ENCODE measurements at regions of chr15 and their contacts with region 1.

Region 1: DNA sequence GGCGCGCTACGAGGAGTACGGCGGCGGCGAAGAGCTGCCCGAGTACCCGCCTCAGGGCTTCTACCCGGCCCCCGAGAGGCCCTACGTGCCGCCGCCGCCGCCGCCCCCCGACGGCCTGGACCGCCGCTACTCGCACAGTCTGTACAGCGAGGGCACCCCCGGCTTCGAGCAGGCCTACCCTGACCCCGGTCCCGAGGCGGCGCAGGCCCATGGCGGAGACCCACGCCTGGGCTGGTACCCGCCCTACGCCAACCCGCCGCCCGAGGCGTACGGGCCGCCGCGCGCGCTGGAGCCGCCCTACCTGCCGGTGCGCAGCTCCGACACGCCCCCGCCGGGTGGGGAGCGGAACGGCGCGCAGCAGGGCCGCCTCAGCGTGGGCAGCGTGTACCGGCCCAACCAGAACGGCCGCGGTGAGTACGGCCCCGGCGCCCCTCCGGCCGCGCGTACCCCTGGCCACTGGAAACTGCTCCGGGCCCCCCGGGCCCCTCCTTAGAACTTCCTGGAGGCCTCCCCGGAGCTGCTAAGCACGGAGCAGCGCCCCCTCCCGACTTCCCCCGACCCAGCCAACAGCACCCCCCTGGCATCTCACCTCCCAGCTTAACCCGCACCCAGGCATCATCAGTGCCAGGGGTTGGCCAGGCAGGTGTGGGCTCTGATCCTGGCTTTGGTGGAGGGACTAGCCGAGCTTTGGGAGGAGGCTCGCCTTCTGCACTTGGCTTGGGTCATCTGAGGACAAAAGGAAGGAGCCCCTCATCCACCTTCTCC is 1.4 kb downstream of the LOXL1 start:
- DNase-seq: peak; percentile 93
- H3K4me3 Mint-ChIP-seq: peak overlapping the region; percentile 84
- H3K27ac Mint-ChIP-seq: peak overlapping the region; percentile 51
- H3K4me1 Mint-ChIP-seq: peaks cover 39% of the 10 kb centered on the region
- H3K27me3 Mint-ChIP-seq: peaks cover 6% of the 10 kb centered on the region

Region 2: GRCh38 chr15:73633991-73634495 is 293.6 kb before region 1 on chr15:
- intact Hi-C with region 1: no loop called
- DNase-seq: peak; percentile 59
- H3K4me3 Mint-ChIP-seq: peak overlapping the region; percentile 86
- H3K27ac Mint-ChIP-seq: peak overlapping the region; percentile 82
- H3K4me1 Mint-ChIP-seq: peaks cover 34% of the 10 kb centered on the region
- H3K27me3 Mint-ChIP-seq: peaks cover 23% of the 10 kb centered on the region

Region 3: GRCh38 chr15:73897441-73898261 is 30.0 kb before region 1 on chr15:
- intact Hi-C with region 1: loop called (anchors 1 kb)
- DNase-seq: peak; percentile 91
- H3K4me3 Mint-ChIP-seq: no peak overlapping the region
- H3K27ac Mint-ChIP-seq: no peak overlapping the region
- H3K4me1 Mint-ChIP-seq: no peaks in the 10 kb centered on the region
- H3K27me3 Mint-ChIP-seq: peaks cover 5% of the 10 kb centered on the region

Region 4: GRCh38 chr15:73950831-73951561 is 23.3 kb after region 1 on chr15:
- intact Hi-C with region 1: no loop called
- DNase-seq: peak; percentile 93
- H3K4me3 Mint-ChIP-seq: peak overlapping the region; percentile 31
- H3K27ac Mint-ChIP-seq: peak overlapping the region; percentile 69
- H3K4me1 Mint-ChIP-seq: peaks cover 4% of the 10 kb centered on the region
- H3K27me3 Mint-ChIP-seq: peaks cover under 1% of the 10 kb centered on the region

Region 5: GRCh38 chr15:73964736-73965093 is 37.1 kb after region 1 on chr15:
- intact Hi-C with region 1: loop called (anchors 1 kb)
- DNase-seq: peak; percentile 96
- H3K4me3 Mint-ChIP-seq: peak overlapping the region; percentile 72
- H3K27ac Mint-ChIP-seq: peak overlapping the region; percentile 92
- H3K4me1 Mint-ChIP-seq: peaks cover 32% of the 10 kb centered on the region
- H3K27me3 Mint-ChIP-seq: peaks cover 6% of the 10 kb centered on the region

Region 6: GRCh38 chr15:73991726-73992593 is 64.3 kb after region 1 on chr15 and contains the start of gene STOML1:
- intact Hi-C with region 1: loop called (anchors 1 kb)
- DNase-seq: peak; percentile 100
- H3K4me3 Mint-ChIP-seq: peak within 1 kb of the TSS; percentile 85
- H3K27ac Mint-ChIP-seq: peak within 1 kb of the TSS; percentile 86
- H3K4me1 Mint-ChIP-seq: peaks cover 50% of the 10 kb centered on the region
- H3K27me3 Mint-ChIP-seq: no peaks in the 10 kb centered on the region
- total RNA-seq, gene STOML1: 10.3 and 10.6 TPM in 2 replicates

Measured in activated CD4-positive, alpha-beta T cell treated with anti-CD3 and anti-CD28 coated beads, Interleukin-2, amount 10 ng/mL, durations not matched to agents 24 days and 14 days (primary cell).